ENCODE measurements at regions of chr4 and their contacts with region 1.

Region 1: GRCh38 chr4:26028793-26029567 is 115.0 kb downstream of the SMIM20 start:
- DNase-seq: peak; percentile 27
- ATAC-seq: peak; percentile 98
- H3K4me3 ChIP-seq: no peak overlapping the region; a peak in 1 of 6 replicates
- H3K27ac ChIP-seq: no peak overlapping the region
- H3K4me1 ChIP-seq: peaks cover 36% of the 10 kb centered on the region
- H3K27me3 ChIP-seq: peaks cover 5 to 50% of the 10 kb centered on the region in 2 experiments
- CTCF ChIP-seq: peak; percentile 94
- EP300 ChIP-seq: no peak
- POLR2A ChIP-seq: no peak
- RAD21 ChIP-seq: peak; percentile 95

Region 2: GRCh38 chr4:26130173-26130572 is 101.2 kb after region 1 on chr4:
- CTCF ChIA-PET with region 1: no interaction called
- POLR2A ChIA-PET with region 1: no interaction called
- in situ Hi-C with region 1: no loop called
- intact Hi-C with region 1: loop called (anchors 10 kb)
- DNase-seq: no peak
- ATAC-seq: no peak
- H3K4me3 ChIP-seq: no peak overlapping the region
- H3K27ac ChIP-seq: no peak overlapping the region
- H3K4me1 ChIP-seq: no peaks in the 10 kb centered on the region
- H3K27me3 ChIP-seq: no peaks in the 10 kb centered on the region
- CTCF ChIP-seq: no peak
- EP300 ChIP-seq: no peak
- POLR2A ChIP-seq: no peak
- RAD21 ChIP-seq: no peak

Region 3: DNA sequence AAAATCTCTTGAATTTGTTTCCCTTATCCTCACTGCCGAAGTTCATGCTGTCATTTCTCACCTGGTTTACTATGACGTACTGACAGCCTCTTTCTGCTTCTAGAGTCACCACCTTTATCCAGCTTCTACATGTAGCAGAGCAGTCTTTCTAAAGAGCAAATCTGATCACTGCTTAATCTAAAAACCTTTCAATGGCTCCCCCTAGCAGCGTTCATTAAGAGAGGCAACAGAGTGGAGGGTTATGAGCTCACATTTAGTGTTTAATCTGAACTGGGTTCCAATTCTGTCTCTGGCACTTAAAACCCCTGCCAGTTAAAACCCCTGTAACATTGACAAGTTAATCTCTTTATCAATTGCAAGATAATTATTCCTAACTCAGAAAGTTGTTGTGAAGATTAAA is 296.2 kb after region 1 on chr4:
- CTCF ChIA-PET with region 1: no interaction called
- POLR2A ChIA-PET with region 1: no interaction called
- in situ Hi-C with region 1: no loop called
- intact Hi-C with region 1: loop called (anchors 1 kb)
- DNase-seq: peak; percentile 42
- ATAC-seq: no peak
- H3K4me3 ChIP-seq: no peak overlapping the region
- H3K27ac ChIP-seq: no peak overlapping the region
- H3K4me1 ChIP-seq: peaks cover 22% of the 10 kb centered on the region
- H3K27me3 ChIP-seq: no peaks in the 10 kb centered on the region; a peak in 1 of 5 replicates
- CTCF ChIP-seq: peak; percentile 46
- EP300 ChIP-seq: no peak
- POLR2A ChIP-seq: no peak
- RAD21 ChIP-seq: no peak